ENCODE measurements at regions of chr1 and their contacts with region 1.

Region 1: DNA sequence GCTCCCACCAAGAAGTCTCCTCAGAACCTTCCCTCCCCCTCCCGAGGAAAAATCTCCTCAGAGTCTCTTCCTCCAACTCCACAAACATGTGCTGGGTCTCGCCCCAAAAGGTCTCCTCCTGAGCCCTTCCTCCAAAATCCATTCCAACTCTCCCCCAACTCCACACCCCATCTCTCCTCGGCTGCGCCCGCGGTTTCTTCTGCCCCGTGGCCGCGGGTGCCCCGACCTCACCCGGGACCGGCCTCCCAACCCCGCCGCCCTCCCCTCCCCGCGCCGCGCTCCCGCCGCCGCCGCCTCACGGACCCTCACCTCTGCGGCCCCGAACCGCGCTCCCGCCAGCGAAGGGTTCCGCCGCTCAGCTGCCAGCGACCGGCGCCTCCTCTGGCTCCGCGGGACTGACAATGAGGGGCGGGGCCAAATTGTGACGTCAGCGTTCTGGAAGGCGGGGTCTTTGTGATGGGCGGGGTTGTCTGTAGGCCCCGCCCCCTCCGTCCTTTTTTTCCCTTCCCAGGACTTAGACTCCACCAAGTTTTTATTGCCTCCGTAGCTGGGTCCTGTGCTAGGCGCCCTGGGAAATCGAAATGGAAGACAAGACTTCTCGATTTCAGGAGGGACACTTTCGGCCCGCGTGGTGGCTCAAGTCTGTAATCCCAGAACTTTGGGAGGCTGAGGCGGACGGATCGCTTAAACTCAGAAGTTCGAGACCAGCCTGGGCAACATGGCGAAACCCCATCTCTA is at the start of gene LUZP1:
- DNase-seq: peak; percentile 73 to 91 (median 84)
- ATAC-seq: peak; percentile 96
- H3K4me3 ChIP-seq: peak within 1 kb of the TSS; percentile 90
- H3K4me3 Mint-ChIP-seq: peak within 1 kb of the TSS; percentile 84 to 99 (median 96)
- H3K27ac ChIP-seq: peak within 1 kb of the TSS; percentile 84
- H3K27ac Mint-ChIP-seq: peak within 1 kb of the TSS; percentile 57 to 94 (median 87)
- H3K4me1 ChIP-seq: peaks cover 7 to 16% of the 10 kb centered on the region in 2 donors
- H3K4me1 Mint-ChIP-seq: peaks cover 18 to 48% (median 38%) of the 10 kb centered on the region in 7 donors
- H3K27me3 ChIP-seq: no peaks in the 10 kb centered on the region
- H3K27me3 Mint-ChIP-seq: peaks cover 0 to 4% (median 0%) of the 10 kb centered on the region in 5 donors
- total RNA-seq, gene LUZP1: 14.8 to 22.9 (median 16.9) TPM

Region 2: DNA sequence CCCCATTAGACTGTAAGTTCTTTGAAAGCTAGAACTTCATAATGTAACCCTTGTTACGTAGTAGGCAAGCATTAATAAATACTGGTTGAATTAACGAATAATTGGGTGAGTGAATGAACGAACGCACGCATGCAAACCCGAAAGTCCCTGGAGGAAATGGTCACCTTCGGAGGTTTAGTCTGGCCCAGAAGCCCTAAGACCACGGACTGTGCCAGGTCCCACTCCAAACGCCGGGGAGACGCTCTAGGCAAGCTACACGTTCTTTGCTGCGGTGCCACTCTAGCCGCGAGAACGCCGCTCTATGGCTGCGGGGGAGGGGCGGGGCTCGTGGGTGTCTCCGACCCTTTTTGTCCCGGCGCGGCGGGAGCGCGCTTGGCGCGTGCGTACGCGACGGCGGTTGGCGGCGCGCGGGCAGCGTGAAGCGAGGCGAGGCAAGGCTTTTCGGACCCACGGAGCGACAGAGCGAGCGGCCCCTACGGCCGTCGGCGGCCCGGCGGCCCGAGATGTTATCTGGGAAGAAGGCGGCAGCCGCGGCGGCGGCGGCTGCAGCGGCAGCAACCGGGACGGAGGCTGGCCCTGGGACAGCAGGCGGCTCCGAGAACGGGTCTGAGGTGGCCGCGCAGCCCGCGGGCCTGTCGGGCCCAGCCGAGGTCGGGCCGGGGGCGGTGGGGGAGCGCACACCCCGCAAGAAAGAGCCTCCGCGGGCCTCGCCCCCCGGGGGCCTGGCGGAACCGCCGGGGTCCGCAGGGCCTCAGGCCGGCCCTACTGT is 149.3 kb before region 1 on chr1 and contains the start of gene KDM1A:
- CTCF ChIA-PET with region 1: no interaction called
- POLR2A ChIA-PET with region 1: no interaction called
- intact Hi-C with region 1: loop called in 1 of 2 experiments (anchors 1 kb)
- DNase-seq: peak; percentile 88 to 95 (median 92)
- ATAC-seq: peak; percentile 99
- H3K4me3 ChIP-seq: peak within 1 kb of the TSS; percentile 84
- H3K4me3 Mint-ChIP-seq: peak within 1 kb of the TSS; percentile 87 to 98 (median 98)
- H3K27ac ChIP-seq: peak within 1 kb of the TSS; percentile 76
- H3K27ac Mint-ChIP-seq: peak within 1 kb of the TSS; percentile 86 to 98 (median 93)
- H3K4me1 ChIP-seq: peaks cover 4 to 14% of the 10 kb centered on the region in 2 donors
- H3K4me1 Mint-ChIP-seq: peaks cover 16 to 52% (median 46%) of the 10 kb centered on the region in 7 donors
- H3K27me3 ChIP-seq: no peaks in the 10 kb centered on the region
- H3K27me3 Mint-ChIP-seq: no peaks in the 10 kb centered on the region
- total RNA-seq, gene KDM1A: 40.6 to 56.0 (median 47.7) TPM

Region 3: DNA sequence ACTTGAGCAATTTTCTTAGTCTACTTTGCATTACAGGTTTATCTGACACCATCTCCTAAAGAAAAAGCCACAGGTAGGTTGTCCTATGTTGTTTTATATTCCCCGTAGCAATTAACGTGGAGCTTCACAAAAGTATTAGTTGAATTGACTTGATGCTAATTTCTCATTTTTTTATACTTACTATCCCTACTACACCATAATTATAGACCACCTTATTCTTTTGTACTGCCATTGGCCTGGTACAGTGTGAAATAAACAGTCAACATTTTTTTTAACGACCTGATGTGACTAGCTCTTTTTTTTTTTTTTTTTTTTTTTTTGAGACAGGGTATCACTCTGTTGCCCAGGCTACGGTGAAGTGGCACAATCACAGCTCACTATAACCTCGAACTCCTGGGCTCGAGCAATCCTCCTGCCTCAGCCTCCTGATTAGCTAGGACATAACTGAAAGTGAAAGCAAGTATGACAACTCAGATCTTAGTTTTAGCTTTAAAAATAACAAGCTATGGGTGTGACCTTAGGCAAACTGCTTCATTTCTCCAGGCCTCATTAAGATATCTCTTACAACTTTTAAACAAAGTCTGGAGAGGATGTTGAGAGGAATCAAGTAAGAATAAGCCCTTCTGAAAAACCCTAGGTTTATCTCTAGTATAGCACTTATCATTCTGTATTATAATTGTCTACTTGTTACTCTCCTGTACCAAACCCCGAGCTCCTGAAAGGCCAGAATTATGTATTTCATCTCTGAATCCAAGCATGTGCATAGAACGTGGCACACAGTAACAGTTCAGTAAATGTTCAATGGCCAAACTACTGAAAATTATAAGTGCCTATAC is 49.5 kb before region 1 on chr1:
- CTCF ChIA-PET with region 1: no interaction called
- POLR2A ChIA-PET with region 1: interaction called, 4 read pairs
- intact Hi-C with region 1: loop called in 1 of 2 experiments (anchors 5 kb)
- DNase-seq: peak in 6 of 9 donors; percentile 8 to 49 (median 33)
- ATAC-seq: peak; percentile 89
- H3K4me3 ChIP-seq: peak overlapping the region; percentile 7
- H3K4me3 Mint-ChIP-seq: peak overlapping the region; percentile 40 to 81 (median 69)
- H3K27ac ChIP-seq: peak overlapping the region; percentile 36
- H3K27ac Mint-ChIP-seq: peak overlapping the region; percentile 23 to 89 (median 81)
- H3K4me1 ChIP-seq: peaks cover 22 to 30% of the 10 kb centered on the region in 2 donors
- H3K4me1 Mint-ChIP-seq: peaks cover 38 to 79% (median 60%) of the 10 kb centered on the region in 7 donors
- H3K27me3 ChIP-seq: no peaks in the 10 kb centered on the region
- H3K27me3 Mint-ChIP-seq: no peaks in the 10 kb centered on the region

Region 4: GRCh38 chr1:23149114-23149513 is 19.5 kb before region 1 on chr1:
- CTCF ChIA-PET with region 1: no interaction called
- POLR2A ChIA-PET with region 1: no interaction called
- intact Hi-C with region 1: loop called in 1 of 2 experiments (anchors 2 kb)
- DNase-seq: no peak
- ATAC-seq: no peak
- H3K4me3 ChIP-seq: no peak overlapping the region
- H3K4me3 Mint-ChIP-seq: peak overlapping the region in 3 of 10 donors; percentile 1 to 8 (median 5)
- H3K27ac ChIP-seq: no peak overlapping the region
- H3K27ac Mint-ChIP-seq: peak overlapping the region in 4 of 9 donors; percentile 16 to 88 (median 49)
- H3K4me1 ChIP-seq: peaks cover 12 to 15% of the 10 kb centered on the region in 2 donors
- H3K4me1 Mint-ChIP-seq: peaks cover 20 to 55% (median 34%) of the 10 kb centered on the region in 7 donors
- H3K27me3 ChIP-seq: no peaks in the 10 kb centered on the region
- H3K27me3 Mint-ChIP-seq: no peaks in the 10 kb centered on the region

Region 5: DNA sequence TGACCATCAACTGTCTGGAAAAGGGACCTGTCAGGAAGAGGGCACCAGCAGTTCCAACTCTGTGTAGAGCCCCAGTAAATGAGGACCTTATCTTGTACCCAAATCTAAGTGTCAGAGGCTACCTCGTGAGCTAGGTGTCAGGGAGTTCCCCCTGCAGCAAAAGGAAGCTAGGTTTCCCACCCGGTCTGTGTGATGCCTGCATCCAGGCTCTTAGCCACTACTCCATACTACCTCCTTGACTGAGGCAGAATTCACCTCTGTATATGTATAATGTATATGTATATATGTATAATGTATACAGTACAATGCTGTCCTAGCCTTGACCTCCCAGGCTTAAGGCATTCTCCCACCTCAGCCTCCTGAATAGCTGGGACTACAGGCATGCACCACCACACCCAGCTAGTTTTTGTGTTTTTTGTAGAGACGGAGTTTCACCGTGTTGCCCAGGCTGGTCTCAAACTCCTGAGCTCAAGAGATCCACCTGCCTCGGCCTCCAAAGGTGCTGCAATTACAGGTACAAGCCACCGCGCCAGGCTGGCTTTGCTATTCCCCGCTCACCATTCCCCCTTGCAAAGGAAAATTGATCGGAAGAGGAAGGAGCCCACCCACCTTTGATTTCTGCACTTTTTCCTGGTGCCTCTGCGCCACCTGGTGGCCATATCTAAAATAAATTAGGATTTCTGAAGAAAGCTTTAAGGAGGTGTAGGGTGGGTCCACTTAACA is 15.7 kb after region 1 on chr1:
- CTCF ChIA-PET with region 1: interaction called, 16 read pairs
- POLR2A ChIA-PET with region 1: interaction called, 3 read pairs
- intact Hi-C with region 1: no loop called
- DNase-seq: peak; percentile 28 to 66 (median 45)
- ATAC-seq: peak; percentile 47
- H3K4me3 ChIP-seq: no peak overlapping the region
- H3K4me3 Mint-ChIP-seq: peak overlapping the region in 9 of 10 donors; percentile 55 to 81 (median 77)
- H3K27ac ChIP-seq: no peak overlapping the region
- H3K27ac Mint-ChIP-seq: peak overlapping the region in 2 of 9 donors; percentile 31 to 60
- H3K4me1 ChIP-seq: peaks cover 0 to 7% of the 10 kb centered on the region in 2 donors
- H3K4me1 Mint-ChIP-seq: peaks cover 0 to 8% (median 4%) of the 10 kb centered on the region in 7 donors
- H3K27me3 ChIP-seq: no peaks in the 10 kb centered on the region
- H3K27me3 Mint-ChIP-seq: peaks cover 0 to 11% (median 0%) of the 10 kb centered on the region in 5 donors

Measured in naive thymus-derived CD4-positive, alpha-beta T cell (primary cell).